ENCODE measurements at regions of chr7 and their contacts with region 1.

Region 1: DNA sequence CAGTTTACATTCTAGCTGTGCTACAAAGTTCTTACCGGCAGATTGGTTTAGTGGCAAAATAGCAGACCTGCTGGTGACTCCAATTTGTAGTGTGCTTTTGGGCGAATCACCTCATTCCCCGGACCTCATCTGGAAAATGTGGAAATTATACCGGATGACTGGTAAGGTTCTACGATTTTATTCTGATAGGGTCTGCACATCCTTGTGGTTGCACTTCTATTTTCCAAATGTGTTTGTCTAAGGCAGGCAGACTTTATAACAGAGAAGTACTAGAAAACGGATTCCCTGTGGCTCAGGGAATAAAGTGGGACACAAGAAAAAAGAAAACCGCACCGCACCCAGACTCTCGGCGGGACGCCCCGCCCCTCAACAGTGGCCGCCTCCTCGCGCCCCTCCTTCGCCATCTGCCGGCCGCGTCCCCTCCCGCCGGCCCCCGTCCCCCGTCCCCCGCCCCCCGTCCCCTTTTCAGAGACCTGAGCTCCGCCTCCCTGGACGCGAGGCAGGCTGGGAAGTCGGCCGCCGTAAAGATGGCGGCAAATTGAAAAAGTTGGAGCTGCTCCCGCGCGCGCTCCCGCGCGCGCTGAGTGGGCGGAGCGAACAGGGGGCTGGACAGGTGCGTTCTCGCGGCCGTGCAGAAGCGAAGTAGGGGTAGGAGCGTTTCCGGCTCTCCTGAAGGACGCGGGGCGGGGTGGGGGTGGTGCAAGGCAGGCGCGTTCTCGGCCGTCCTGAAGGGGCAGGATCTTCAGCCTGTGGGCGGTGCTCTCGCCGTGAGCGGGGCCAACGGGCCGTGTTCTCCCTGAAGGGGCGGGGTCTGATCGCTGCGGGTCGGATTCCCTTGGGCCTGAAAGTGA is 531 bp upstream of the CCM2 start:
- DNase-seq: peak; percentile 100
- ATAC-seq: peak; percentile 95
- H3K4me3 Mint-ChIP-seq: peak overlapping the region; percentile 85
- H3K27ac Mint-ChIP-seq: peak overlapping the region; percentile 91
- H3K4me1 Mint-ChIP-seq: peaks cover 55% of the 10 kb centered on the region
- H3K27me3 Mint-ChIP-seq: no peaks in the 10 kb centered on the region

Region 2: DNA sequence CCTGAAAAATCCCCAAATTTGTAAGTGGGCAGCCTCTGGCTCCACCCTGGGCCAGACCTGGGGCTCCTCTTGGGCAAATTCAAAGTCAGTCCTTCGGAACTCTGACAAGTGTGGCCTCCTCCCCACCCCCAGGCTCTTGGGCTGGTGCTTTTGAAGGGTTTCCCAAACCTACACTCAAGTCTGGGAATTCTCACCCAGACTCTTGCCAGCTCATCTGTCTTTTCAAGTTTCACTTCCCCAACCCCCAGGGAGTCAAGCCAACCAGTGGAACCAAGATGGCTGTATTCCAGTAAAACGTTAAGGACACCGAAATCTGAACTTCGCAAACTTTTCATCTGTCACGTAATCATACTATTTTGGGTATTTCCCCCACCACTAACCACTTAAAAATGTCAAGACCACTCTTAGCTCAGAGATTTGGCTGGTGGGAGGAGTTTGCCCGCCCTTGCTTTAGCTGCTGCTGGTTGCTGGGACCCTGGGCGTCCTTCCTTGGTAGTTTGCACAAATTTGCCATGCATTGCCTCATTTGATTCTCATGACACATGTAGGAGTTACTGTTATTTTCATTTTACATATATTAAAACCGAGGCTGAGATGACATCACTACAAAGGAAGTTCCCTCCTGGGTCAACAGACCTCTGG is 19.0 kb before region 1 on chr7:
- CTCF ChIA-PET with region 1: interaction called, 111 read pairs
- POLR2A ChIA-PET with region 1: interaction called, 234 read pairs
- DNase-seq: peak; percentile 76
- ATAC-seq: peak; percentile 11
- H3K4me3 Mint-ChIP-seq: peak overlapping the region; percentile 95
- H3K27ac Mint-ChIP-seq: peak overlapping the region; percentile 98
- H3K4me1 Mint-ChIP-seq: peaks cover 75% of the 10 kb centered on the region
- H3K27me3 Mint-ChIP-seq: no peaks in the 10 kb centered on the region

Region 3: DNA sequence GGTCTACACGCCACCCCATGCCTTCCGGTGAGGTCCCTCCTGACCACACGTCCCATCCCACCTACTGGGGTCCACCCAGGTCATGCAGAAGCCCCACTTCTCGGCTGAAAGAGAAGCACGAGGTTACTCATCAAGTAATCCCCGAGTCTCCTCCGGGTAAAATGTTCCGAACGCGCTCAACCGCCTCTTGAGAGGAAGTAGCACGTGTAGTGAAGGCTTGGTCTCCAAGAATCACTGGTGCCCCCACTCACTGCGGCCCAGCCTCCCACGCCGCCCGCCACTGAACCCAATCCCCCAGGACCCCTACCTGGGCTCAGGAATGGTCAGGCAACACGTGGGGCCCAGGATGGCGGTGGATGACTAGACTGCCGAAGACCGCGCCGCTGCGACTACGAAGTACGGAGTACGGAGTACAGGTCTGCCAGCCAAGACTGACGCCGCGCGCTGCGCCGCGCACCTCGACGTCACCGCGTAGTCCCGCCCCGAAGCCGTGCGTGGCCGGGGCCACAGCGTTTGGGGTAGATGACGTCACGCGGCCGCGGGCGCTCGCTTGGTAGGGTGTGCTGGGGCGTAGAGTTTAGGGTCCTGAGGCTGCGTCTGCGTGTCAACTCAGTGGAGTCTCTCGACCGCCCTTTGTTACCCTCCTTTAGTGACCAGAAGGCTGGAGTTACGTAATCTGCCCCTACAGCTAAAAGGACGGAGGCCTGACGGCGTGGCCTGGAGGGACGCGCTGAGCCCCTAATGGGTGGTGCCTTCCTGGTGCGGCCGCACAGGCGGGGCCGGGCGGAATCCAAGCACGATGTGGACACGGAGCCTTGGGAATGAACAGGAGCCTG is 13.0 kb before region 1 on chr7:
- CTCF ChIA-PET with region 1: interaction called, 42 read pairs
- POLR2A ChIA-PET with region 1: interaction called, 234 read pairs
- DNase-seq: peak; percentile 97
- ATAC-seq: peak; percentile 96
- H3K4me3 Mint-ChIP-seq: peak overlapping the region; percentile 99
- H3K27ac Mint-ChIP-seq: peak overlapping the region; percentile 99
- H3K4me1 Mint-ChIP-seq: peaks cover 54% of the 10 kb centered on the region
- H3K27me3 Mint-ChIP-seq: no peaks in the 10 kb centered on the region

Region 4: GRCh38 chr7:45021604-45022296 is 22.3 kb after region 1 on chr7:
- CTCF ChIA-PET with region 1: interaction called, 45 read pairs
- POLR2A ChIA-PET with region 1: interaction called, 55 read pairs
- DNase-seq: no peak
- ATAC-seq: peak; percentile 75
- H3K4me3 Mint-ChIP-seq: no peak overlapping the region
- H3K27ac Mint-ChIP-seq: peak overlapping the region; percentile 64
- H3K4me1 Mint-ChIP-seq: peaks cover 42% of the 10 kb centered on the region
- H3K27me3 Mint-ChIP-seq: no peaks in the 10 kb centered on the region

Region 5: DNA sequence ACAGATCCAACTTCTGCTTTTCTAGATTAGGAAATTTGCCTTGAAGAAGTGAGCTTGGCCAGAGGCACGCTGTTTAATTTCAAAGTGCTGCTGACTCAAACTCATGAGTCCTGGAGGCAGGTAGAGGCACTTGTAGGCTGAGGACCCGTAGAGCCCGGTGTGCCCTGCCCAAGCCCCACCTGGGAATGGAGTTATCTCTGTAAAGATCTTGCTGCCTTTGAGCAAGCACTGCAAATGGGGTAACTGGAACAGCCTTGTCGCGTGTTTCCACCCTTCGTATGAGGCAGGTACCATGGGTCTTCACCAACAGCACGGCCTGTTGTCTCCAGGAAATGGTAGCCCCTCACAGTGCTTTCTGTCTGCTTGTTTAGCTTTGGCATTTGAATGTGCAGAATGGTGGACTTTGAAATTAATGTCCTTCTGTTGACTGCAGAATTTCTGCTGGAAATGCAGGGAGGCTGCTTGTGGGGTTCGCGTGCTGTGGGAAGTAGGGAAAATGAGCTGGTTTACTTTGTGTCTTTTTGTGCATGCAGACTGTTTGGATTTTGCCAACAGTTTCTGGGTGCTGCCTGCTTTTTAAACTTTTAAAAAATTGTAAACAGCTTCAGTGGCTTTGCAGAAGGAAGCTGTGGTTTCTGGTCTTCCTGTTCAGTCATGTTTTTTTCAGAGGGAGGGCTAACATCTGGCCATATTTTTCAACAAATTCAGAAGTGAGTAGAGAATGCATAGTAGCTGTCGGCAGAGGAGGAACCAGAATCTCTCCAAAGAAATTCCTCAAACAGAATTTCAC is 27.7 kb after region 1 on chr7:
- CTCF ChIA-PET with region 1: interaction called, 45 read pairs
- POLR2A ChIA-PET with region 1: interaction called, 55 read pairs
- DNase-seq: peak; percentile 56
- ATAC-seq: peak; percentile 57
- H3K4me3 Mint-ChIP-seq: peak overlapping the region; percentile 80
- H3K27ac Mint-ChIP-seq: peak overlapping the region; percentile 84
- H3K4me1 Mint-ChIP-seq: peaks cover 67% of the 10 kb centered on the region
- H3K27me3 Mint-ChIP-seq: no peaks in the 10 kb centered on the region

Region 6: DNA sequence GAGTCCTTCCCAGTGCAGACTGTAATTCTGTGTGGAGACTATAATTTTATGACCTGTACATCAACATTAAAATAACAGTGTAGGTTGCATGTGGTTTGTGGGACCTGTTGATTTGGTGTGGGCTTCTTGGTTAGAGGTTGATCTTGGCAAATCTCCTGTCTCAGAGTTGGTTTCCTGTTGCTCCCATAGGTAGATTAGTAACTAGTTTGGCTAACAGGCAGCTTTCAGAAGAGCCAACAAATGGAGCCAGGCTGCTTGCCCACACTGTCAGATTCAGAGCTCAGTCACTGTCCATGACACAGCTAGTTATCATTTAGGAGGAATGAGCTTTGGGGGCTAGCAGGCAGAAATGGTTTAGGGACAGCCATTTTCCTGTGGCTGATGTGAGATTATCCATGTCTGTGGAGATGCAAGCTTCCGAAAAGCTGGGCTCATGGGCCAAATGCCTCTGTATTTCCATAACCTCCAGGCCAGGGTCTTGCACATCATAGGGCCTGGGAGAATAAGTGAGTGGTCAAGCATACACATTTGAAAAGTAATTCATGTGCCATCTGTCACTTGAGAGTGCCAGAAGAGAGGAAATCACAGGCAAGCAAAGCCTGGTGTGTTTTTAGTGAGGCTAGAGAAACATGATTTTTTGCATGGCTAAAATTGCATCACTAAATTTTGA is 33.9 kb after region 1 on chr7:
- CTCF ChIA-PET with region 1: interaction called, 45 read pairs
- POLR2A ChIA-PET with region 1: interaction called, 55 read pairs
- DNase-seq: peak; percentile 57
- ATAC-seq: peak; percentile 37
- H3K4me3 Mint-ChIP-seq: peak overlapping the region; percentile 63
- H3K27ac Mint-ChIP-seq: peak overlapping the region; percentile 71
- H3K4me1 Mint-ChIP-seq: peaks cover 84% of the 10 kb centered on the region
- H3K27me3 Mint-ChIP-seq: no peaks in the 10 kb centered on the region

Region 7: GRCh38 chr7:45111298-45112223 is 112.1 kb after region 1 on chr7 and contains the start of gene TBRG4:
- CTCF ChIA-PET with region 1: no interaction called
- POLR2A ChIA-PET with region 1: interaction called, 20 read pairs
- DNase-seq: peak; percentile 97
- ATAC-seq: peak; percentile 90
- H3K4me3 Mint-ChIP-seq: peak within 1 kb of the TSS; percentile 90
- H3K27ac Mint-ChIP-seq: peak within 1 kb of the TSS; percentile 97
- H3K4me1 Mint-ChIP-seq: peaks cover 41% of the 10 kb centered on the region
- H3K27me3 Mint-ChIP-seq: peaks cover 16% of the 10 kb centered on the region
- total RNA-seq, gene TBRG4: 133 to 137 TPM